ENCODE measurements at regions of chrX and their contacts with region 1.

Region 1: GRCh38 chrX:37745354-37745753 is 34.5 kb upstream of the CYBB start:
- DNase-seq: peak in 1 of 2 experiments; percentile 58
- H3K4me3 ChIP-seq: no peak overlapping the region
- H3K27ac ChIP-seq: no peak overlapping the region
- H3K4me1 ChIP-seq: no peaks in the 10 kb centered on the region
- H3K27me3 ChIP-seq: no peaks in the 10 kb centered on the region
- CTCF ChIP-seq: peak; percentile 63 to 72 (median 64)
- EP300 ChIP-seq: no peak
- POLR2A ChIP-seq: no peak
- RAD21 ChIP-seq: peak; percentile 73 to 79

Region 2: DNA sequence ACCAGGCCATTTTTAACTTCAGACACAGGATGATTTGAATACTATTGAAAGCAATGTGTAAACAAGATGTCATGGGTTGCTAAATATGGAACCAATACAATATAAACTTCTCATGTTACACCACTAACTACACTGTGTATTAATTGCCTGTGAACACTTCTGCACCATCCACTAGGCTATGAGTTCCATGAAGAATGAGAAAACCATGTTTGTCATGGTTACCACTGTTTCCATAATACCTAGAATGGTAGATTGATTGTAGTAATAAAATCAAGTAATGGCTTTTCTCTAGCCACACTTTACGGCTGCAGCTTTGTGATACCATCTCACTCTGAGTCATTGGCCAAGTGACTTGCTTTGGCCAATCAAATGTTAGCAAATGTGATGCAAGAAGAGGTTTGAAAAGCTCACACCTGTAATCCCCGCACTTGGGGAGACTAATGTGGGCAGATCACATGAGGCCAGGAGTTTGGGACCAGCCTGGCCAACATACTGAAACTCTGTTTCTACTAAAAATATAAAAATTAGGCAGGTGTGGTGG is 14.6 kb after region 1 on chrX:
- CTCF ChIA-PET with region 1: interaction called, 13 read pairs
- POLR2A ChIA-PET with region 1: interaction called, 3 read pairs
- DNase-seq: no peak
- H3K4me3 ChIP-seq: no peak overlapping the region
- H3K27ac ChIP-seq: no peak overlapping the region
- H3K4me1 ChIP-seq: no peaks in the 10 kb centered on the region
- H3K27me3 ChIP-seq: no peaks in the 10 kb centered on the region
- CTCF ChIP-seq: no peak
- EP300 ChIP-seq: no peak
- POLR2A ChIP-seq: no peak
- RAD21 ChIP-seq: no peak

Region 3: DNA sequence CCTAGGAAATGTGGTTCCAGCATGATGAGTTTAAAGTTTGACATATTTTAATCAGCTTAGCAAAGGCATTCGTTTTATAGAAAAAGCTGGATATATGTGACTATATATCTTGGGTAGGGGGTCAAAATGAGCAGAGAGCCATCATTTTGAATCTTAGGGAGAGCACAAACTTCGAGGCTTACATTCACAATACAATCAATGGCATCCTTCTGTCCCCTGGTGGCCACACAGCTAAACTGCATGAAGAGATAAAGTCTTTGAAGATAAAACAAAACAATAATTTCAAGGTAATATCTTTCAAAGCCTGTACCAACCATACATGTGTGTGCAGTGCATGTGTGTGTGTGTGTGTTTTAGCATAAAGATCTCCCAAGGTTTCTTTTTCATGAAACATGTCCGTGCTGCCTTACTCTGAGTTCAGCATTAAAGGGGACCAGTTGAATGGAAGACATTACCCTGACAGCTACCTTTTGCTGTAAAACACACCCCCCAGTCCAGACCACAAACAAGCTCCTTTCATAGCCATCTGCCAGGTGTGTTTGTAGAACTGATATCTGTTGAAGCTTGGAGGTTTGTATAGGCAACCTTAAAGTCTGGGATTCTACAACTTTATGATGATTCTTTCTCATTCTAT is 80.0 kb after region 1 on chrX:
- CTCF ChIA-PET with region 1: interaction called, 60 read pairs
- POLR2A ChIA-PET with region 1: no interaction called
- DNase-seq: peak in 1 of 2 experiments; percentile 44
- H3K4me3 ChIP-seq: no peak overlapping the region
- H3K27ac ChIP-seq: no peak overlapping the region
- H3K4me1 ChIP-seq: no peaks in the 10 kb centered on the region
- H3K27me3 ChIP-seq: no peaks in the 10 kb centered on the region
- CTCF ChIP-seq: peak in 2 of 3 experiments; percentile 56 to 70; a peak in 3 of 4 replicates
- EP300 ChIP-seq: no peak
- POLR2A ChIP-seq: no peak
- RAD21 ChIP-seq: peak; percentile 81 to 83

Region 4: GRCh38 chrX:38175140-38175539 is 429.8 kb after region 1 on chrX:
- CTCF ChIA-PET with region 1: interaction called, 13 read pairs
- POLR2A ChIA-PET with region 1: no interaction called
- DNase-seq: peak; percentile 7 to 45
- H3K4me3 ChIP-seq: no peak overlapping the region
- H3K27ac ChIP-seq: no peak overlapping the region
- H3K4me1 ChIP-seq: peaks cover 0 to 3% (median under 1%) of the 10 kb centered on the region in 4 experiments; a peak in 4 of 7 replicates
- H3K27me3 ChIP-seq: no peaks in the 10 kb centered on the region
- CTCF ChIP-seq: peak; percentile 63 to 74 (median 72)
- EP300 ChIP-seq: no peak
- POLR2A ChIP-seq: no peak
- RAD21 ChIP-seq: peak; percentile 90 to 93

Measured in H1 (cell line).